HepG2 (cell line): ENCODE measurements at regions of chr22 and their contacts with region 1.

Region 1: DNA sequence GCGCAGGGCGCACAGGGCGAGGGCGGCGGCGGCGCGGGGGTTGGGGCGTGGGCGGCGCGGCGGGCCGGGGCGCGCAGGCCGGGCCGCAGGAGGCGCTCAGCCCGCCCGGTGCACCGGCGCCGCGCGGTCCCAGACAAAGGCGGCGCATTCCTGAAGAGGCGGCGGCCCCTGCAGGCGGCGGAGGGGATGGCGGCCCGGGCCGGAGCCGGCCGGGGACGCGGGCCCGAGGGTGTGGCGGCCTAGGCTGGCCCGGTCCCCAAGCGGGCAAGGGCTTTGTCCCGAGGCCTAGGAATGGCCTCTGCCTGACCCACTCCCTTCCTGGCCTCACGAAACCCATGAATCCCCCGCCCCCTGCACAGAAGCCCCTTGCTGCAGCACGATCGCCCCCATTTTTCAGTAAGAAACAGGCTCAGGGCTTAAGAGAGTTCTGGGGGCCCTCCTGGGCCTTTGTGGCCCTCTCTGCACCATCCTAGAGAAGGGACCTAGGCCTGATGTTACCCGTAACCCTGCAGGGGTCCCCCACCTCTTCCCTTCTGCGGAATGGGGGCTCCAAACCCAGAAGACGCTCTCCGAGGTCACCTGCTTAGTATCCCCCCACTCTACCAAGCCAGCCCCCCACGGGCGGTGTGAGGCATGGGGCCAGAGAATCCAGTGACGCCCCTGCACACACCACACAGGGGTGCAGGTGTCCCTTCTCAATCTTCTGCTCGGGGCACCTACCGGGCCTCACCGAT is at the start of gene RTN4R:
- DNase-seq: peak; percentile 8
- ATAC-seq: peak; percentile 75
- H3K4me3 ChIP-seq: peak within 1 kb of the TSS in 2 of 3 experiments; percentile 16 to 50; a peak in 3 of 6 replicates
- H3K27ac ChIP-seq: no peak within 1 kb of the TSS
- H3K4me1 ChIP-seq: peaks cover 18% of the 10 kb centered on the region
- H3K27me3 ChIP-seq: peaks cover 9 to 57% of the 10 kb centered on the region in 2 experiments
- CTCF ChIP-seq: peak; percentile 64; the same call in 1 of the 2 replicates
- EP300 ChIP-seq: no peak
- POLR2A ChIP-seq: no peak
- RAD21 ChIP-seq: peak; percentile 71
- total RNA-seq, gene RTN4R: 0.11 and 0.22 TPM in 2 replicates

Region 2: GRCh38 chr22:19341500-19341899 is 926.9 kb before region 1 on chr22:
- CTCF ChIA-PET with region 1: no interaction called
- POLR2A ChIA-PET with region 1: no interaction called
- in situ Hi-C with region 1: no loop called
- intact Hi-C with region 1: loop called (anchors 10 kb)
- DNase-seq: no peak
- ATAC-seq: no peak
- H3K4me3 ChIP-seq: no peak overlapping the region
- H3K27ac ChIP-seq: no peak overlapping the region
- H3K4me1 ChIP-seq: peaks cover 7% of the 10 kb centered on the region
- H3K27me3 ChIP-seq: no peaks in the 10 kb centered on the region
- CTCF ChIP-seq: no peak
- EP300 ChIP-seq: no peak
- POLR2A ChIP-seq: no peak
- RAD21 ChIP-seq: no peak

Region 3: GRCh38 chr22:20238536-20238900 is 29.9 kb before region 1 on chr22:
- CTCF ChIA-PET with region 1: no interaction called
- POLR2A ChIA-PET with region 1: no interaction called
- in situ Hi-C with region 1: no loop called
- intact Hi-C with region 1: no loop called
- DNase-seq: peak; percentile 41
- ATAC-seq: peak; percentile 91
- H3K4me3 ChIP-seq: no peak overlapping the region
- H3K27ac ChIP-seq: no peak overlapping the region
- H3K4me1 ChIP-seq: 0 out of 2 replicates have a peak, but pooled peaks cover 5% of the 10 kb centered on the region
- H3K27me3 ChIP-seq: peaks cover 17 to 82% of the 10 kb centered on the region in 2 experiments
- CTCF ChIP-seq: peak; percentile 88
- EP300 ChIP-seq: no peak
- POLR2A ChIP-seq: no peak
- RAD21 ChIP-seq: peak; percentile 86

Region 4: DNA sequence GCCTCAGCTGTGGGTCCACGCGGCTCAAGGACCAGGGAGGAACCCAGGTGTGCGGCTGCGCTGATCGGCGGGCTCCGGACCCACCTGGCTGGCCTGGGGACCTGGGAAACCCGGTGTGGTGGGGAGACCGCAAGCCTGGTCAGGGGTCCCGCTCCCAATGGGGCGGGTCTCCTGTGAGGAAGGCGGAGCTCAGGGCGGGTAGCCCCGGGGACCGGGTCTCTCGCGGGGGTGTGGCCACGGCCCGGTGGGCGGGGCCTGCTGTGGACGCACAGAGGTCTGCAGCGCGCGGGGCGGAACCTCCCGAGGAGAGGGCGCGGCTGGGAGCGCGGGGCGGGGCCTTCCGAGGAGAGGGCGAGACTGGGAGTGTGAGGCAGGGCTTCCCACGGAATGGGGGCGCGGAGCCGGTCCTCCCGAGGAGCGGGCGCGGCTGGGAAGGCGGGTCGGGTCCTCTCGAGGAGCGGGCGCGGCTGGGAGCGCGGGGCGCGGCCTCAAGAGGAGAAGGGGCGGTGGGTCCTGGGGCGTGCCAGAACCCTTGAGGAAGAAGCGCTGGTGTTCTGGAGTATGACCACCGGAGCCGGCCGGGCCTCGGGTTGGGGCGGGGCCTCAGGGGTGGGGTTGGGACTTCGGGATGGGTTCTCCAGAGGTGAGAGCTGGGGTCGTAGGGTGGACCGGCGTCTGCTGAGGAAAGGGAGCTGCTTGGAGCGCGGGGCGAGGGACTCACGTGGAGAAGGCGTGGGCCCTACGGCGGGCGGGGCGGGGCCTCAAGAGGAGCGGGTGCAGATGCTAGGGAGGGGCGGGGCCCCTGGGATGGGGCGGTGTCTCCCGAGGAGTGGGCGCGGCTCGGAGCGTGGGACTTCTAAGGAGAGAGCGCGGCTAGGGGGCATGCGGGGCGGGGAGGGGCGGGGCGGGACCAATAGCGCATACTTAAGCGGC is 30.6 kb after region 1 on chr22:
- CTCF ChIA-PET with region 1: no interaction called
- POLR2A ChIA-PET with region 1: no interaction called
- in situ Hi-C with region 1: no loop called
- intact Hi-C with region 1: no loop called
- DNase-seq: peak; percentile 20
- ATAC-seq: peak; percentile 74
- H3K4me3 ChIP-seq: peak overlapping the region; percentile 21 to 66 (median 35); a peak in 3 of 6 replicates
- H3K27ac ChIP-seq: no peak overlapping the region
- H3K4me1 ChIP-seq: no peaks in the 10 kb centered on the region
- H3K27me3 ChIP-seq: peaks cover 4 to 67% of the 10 kb centered on the region in 2 experiments
- CTCF ChIP-seq: no peak
- EP300 ChIP-seq: no peak
- POLR2A ChIP-seq: no peak
- RAD21 ChIP-seq: no peak